Gastrocnemius medialis (tissue), 4 donors: ENCODE measurements at regions of chr4 and their contacts with region 1.

Region 1: GRCh38 chr4:103008875-103009729 is 10.4 kb downstream of the SLC9B1 start:
- DNase-seq: no peak
- ATAC-seq: peak; percentile 89 to 91
- H3K4me3 ChIP-seq: no peak overlapping the region
- H3K27ac ChIP-seq: no peak overlapping the region
- H3K4me1 ChIP-seq: peaks cover 13 to 17% of the 10 kb centered on the region in 2 donors
- H3K27me3 ChIP-seq: no peaks in the 10 kb centered on the region
- CTCF ChIP-seq: peak in 4 of 5 experiments; percentile 66 to 81 (median 73)
- POLR2A ChIP-seq: no peak

Region 2: GRCh38 chr4:102439236-102439614 is 569.9 kb before region 1 on chr4:
- in situ Hi-C with region 1: loop called in 2 of 4 experiments (anchors 5 to 25 kb)
- intact Hi-C with region 1: loop called (anchors 2 kb)
- DNase-seq: peak in 1 of 2 donors; percentile 23
- ATAC-seq: peak; percentile 89 to 97
- H3K4me3 ChIP-seq: peak overlapping the region in 1 of 4 donors; percentile 18
- H3K27ac ChIP-seq: peak overlapping the region; percentile 58 to 70 (median 66)
- H3K4me1 ChIP-seq: peaks cover 15 to 18% of the 10 kb centered on the region in 2 donors
- H3K27me3 ChIP-seq: no peaks in the 10 kb centered on the region
- CTCF ChIP-seq: no peak
- POLR2A ChIP-seq: no peak

Region 3: GRCh38 chr4:102444752-102445151 is 564.4 kb before region 1 on chr4:
- in situ Hi-C with region 1: loop called in 3 of 4 experiments (anchors 5 to 25 kb)
- intact Hi-C with region 1: loop called (anchors 1 kb)
- DNase-seq: no peak
- ATAC-seq: no peak
- H3K4me3 ChIP-seq: no peak overlapping the region
- H3K27ac ChIP-seq: no peak overlapping the region
- H3K4me1 ChIP-seq: peaks cover 4% of the 10 kb centered on the region in 2 donors
- H3K27me3 ChIP-seq: no peaks in the 10 kb centered on the region
- CTCF ChIP-seq: no peak
- POLR2A ChIP-seq: no peak

Region 4: GRCh38 chr4:102449751-102450352 is 559.2 kb before region 1 on chr4:
- in situ Hi-C with region 1: loop called in 3 of 4 experiments (anchors 5 to 25 kb)
- intact Hi-C with region 1: loop called (anchors 1 kb)
- DNase-seq: no peak
- ATAC-seq: peak; percentile 68 to 75
- H3K4me3 ChIP-seq: no peak overlapping the region
- H3K27ac ChIP-seq: no peak overlapping the region
- H3K4me1 ChIP-seq: no peaks in the 10 kb centered on the region
- H3K27me3 ChIP-seq: no peaks in the 10 kb centered on the region
- CTCF ChIP-seq: peak; percentile 27 to 68 (median 42)
- POLR2A ChIP-seq: no peak

Region 5: DNA sequence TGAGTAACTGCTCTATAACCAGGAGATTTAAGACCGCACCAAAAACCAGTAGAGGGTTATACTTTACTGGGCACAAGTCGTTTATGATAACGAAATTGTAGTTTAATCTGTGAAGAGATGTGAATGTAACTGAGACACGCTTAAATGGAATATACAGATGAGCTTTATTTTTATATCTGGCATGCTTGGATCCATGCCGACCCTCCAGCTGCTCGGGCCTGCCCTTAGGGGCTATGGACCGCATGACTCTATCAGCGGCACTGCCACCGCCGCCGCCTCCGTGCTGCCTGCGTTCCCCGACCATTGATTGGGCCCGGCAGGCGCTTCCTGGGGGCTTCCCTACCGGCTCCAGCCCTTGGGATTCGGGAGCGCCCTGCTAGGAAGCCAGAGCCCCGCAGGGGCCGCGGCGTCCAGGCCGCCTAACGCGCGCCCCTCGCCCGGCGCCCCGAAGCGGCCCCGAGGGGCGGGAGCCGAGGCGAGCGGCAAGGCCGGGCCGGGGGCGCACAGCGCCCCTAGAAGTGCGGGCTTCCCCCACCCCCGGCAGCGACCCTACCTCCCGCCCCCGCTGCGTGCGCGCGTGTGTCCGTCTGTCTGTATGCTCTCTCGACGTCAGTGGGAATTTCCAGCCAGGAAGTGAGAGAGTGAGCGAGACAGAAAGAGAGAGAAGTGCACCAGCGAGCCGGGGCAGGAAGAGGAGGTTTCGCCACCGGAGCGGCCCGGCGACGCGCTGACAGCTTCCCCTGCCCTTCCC is 508.2 kb before region 1 on chr4 and contains the start of gene NFKB1:
- in situ Hi-C with region 1: no loop called
- intact Hi-C with region 1: loop called (anchors 5 kb)
- DNase-seq: peak; percentile 37 to 66
- ATAC-seq: peak; percentile 56 to 66
- H3K4me3 ChIP-seq: peak within 1 kb of the TSS; percentile 71 to 98 (median 88)
- H3K27ac ChIP-seq: peak within 1 kb of the TSS; percentile 97 to 99 (median 98)
- H3K4me1 ChIP-seq: peaks cover 37 to 43% of the 10 kb centered on the region in 2 donors
- H3K27me3 ChIP-seq: no peaks in the 10 kb centered on the region
- CTCF ChIP-seq: no peak
- POLR2A ChIP-seq: peak in 1 of 2 donors; percentile 50
- total RNA-seq, gene NFKB1: 20.0 to 27.2 (median 22.7) TPM

Region 6: DNA sequence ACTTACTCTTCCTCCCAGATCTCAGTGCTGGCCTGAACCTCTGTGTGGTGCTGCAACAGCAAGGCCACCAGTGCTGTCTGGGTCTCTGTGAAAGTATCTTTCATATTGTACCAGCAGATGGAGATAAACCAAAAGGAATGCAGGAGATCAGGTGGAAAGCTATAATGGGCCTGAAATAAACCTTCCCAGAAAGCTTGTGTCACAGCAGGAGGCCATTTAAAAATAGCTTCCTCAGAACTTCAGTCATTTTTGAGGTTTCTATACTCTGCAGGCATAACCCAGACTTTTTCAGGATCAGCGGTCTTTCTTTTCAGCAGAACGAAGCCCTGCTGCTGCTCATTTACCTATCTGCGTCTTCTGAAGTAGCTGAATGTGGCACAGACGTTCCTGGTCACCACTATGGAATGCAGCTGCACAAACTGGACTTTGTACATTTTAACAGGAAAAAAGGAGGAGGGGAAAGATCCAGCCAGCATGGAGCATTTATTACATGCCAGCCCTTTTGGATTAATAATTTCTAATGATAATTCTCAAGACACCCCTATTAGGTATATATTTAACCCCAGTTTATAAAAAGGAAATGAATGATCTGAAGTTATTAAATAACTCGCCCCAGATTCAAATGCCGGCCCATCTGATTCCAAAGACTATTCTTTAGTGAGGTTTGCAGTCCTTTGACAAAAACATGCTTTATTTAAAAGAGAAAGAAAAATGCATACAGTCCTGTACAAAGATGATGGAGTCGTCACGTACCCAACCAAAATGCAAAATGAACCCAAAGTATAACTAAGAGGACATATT is 388.2 kb before region 1 on chr4:
- in situ Hi-C with region 1: loop called (anchors 5 kb)
- intact Hi-C with region 1: loop called (anchors 1 kb)
- DNase-seq: peak in 1 of 2 donors; percentile 28
- ATAC-seq: peak; percentile 97 to 100
- H3K4me3 ChIP-seq: no peak overlapping the region
- H3K27ac ChIP-seq: peak overlapping the region in 3 of 4 donors; percentile 8 to 47 (median 16)
- H3K4me1 ChIP-seq: peaks cover 0 to 4% of the 10 kb centered on the region in 2 donors
- H3K27me3 ChIP-seq: no peaks in the 10 kb centered on the region
- CTCF ChIP-seq: peak; percentile 38 to 66 (median 55)
- POLR2A ChIP-seq: no peak

Region 7: DNA sequence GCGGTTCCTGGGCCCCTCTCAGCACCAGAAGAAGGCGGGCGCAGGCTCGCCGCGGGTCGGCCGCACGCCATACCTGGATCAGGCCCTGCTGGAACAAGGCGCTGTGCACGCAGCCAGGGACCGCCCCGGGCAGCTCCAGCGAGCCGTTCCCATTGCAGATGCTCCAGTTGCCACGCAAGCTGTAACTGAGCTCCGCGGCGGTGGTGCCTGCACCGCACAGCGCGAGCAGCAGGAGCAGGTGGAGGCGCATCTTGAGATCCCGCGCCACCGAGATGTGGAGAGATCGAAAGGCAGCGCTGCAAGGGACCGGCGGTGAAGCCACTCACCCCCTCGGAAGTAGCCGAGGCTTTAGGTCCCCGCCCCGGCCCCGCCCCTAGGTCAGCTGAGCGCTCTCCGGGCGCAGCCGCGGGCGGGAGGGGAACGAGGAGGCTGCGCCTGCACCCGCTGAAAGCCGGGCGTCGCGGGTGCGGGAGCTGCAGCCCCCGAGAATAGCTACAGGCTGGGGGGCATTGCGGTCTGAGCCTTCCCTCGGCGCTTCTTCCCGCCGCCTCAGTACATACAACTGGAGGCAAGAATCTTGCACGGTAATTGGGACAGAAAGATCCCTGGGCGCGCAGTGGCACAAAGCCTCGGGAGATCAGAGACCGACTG is 248.3 kb before region 1 on chr4 and contains the start of gene MANBA:
- in situ Hi-C with region 1: no loop called
- intact Hi-C with region 1: loop called (anchors 5 kb)
- DNase-seq: peak; percentile 72 to 74
- ATAC-seq: peak; percentile 93 to 94
- H3K4me3 ChIP-seq: peak within 1 kb of the TSS; percentile 78 to 99 (median 83)
- H3K27ac ChIP-seq: peak within 1 kb of the TSS; percentile 83 to 89 (median 84)
- H3K4me1 ChIP-seq: peaks cover 5 to 19% of the 10 kb centered on the region in 2 donors
- H3K27me3 ChIP-seq: no peaks in the 10 kb centered on the region
- CTCF ChIP-seq: peak in 2 of 5 experiments; percentile 12 to 37
- POLR2A ChIP-seq: peak; percentile 65 to 71
- total RNA-seq, gene MANBA: 8.9 to 15.5 (median 12.6) TPM